PC-3 (cell line): ENCODE measurements at regions of chr2 and their contacts with region 1.

Region 1: DNA sequence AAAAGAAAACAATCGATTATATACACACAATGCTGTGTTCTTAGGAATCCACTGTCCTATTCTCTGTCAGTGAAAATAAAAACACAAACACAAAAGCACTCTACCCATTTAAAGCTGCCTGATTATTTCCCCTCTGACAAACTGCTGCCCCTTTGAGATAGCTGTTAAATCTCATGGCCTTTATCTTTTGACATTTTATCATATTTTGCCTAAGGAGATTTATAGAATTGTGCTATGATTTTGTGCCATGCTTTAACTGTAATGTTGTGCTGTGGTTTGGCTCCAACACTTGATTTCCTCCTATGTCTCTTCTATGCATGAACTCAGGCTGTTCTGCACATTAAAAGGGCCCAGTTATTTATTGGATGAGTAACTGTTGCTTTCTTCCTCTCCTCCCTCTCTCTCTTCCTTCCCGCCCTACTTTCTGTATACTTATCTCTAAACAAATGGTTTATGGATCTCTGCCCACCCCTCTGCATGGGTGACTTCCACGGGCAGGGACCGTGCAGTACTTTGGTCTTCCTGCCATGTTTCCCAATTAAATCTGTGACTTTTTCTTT is 1096.6 kb downstream of the TSN start:
- DNase-seq: peak; percentile 87
- ATAC-seq: peak; percentile 74
- H3K4me3 ChIP-seq: no peak overlapping the region
- H3K27ac ChIP-seq: peak overlapping the region; percentile 85
- H3K4me1 ChIP-seq: peaks cover 50% of the 10 kb centered on the region
- H3K27me3 ChIP-seq: no peaks in the 10 kb centered on the region
- CTCF ChIP-seq: no peak

Region 2: GRCh38 chr2:122506620-122507019 is 345.4 kb before region 1 on chr2:
- CTCF ChIA-PET with region 1: no interaction called
- POLR2A ChIA-PET with region 1: no interaction called
- intact Hi-C with region 1: loop called (anchors 5 kb)
- DNase-seq: no peak
- ATAC-seq: no peak
- H3K4me3 ChIP-seq: no peak overlapping the region
- H3K27ac ChIP-seq: no peak overlapping the region
- H3K4me1 ChIP-seq: no peaks in the 10 kb centered on the region
- H3K27me3 ChIP-seq: no peaks in the 10 kb centered on the region
- CTCF ChIP-seq: no peak

Region 3: DNA sequence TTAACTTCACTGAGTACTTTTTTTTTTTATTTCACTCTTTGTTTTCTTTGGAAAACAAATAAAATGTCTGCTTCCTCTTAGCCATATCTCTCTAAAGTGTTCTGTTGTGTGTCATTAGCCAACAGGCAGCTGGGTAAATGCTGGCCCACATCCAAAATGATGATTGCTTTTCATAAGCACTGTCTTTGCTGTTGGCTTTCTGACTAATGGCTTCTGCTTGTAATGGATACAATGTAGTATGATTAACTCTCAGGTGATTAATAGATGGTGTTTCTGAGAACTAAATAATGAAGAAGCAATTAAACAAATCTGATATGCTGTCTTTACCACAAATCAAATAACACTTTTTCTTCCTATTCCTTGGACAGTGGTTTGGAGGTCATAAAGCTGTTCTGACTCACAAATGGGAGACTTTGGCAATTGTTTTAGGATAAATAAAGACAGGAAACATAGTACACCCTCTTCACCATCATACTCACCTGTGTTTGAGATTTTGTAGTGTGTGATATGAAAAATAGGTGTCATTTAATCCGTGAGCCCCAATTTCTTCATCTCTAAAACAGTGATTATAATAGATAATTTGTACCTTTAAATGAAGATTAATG is 208.2 kb before region 1 on chr2:
- CTCF ChIA-PET with region 1: no interaction called
- POLR2A ChIA-PET with region 1: no interaction called
- intact Hi-C with region 1: loop called (anchors 5 kb)
- DNase-seq: peak; percentile 97
- ATAC-seq: peak; percentile 95
- H3K4me3 ChIP-seq: no peak overlapping the region
- H3K27ac ChIP-seq: peak overlapping the region; percentile 64
- H3K4me1 ChIP-seq: peaks cover 23% of the 10 kb centered on the region
- H3K27me3 ChIP-seq: no peaks in the 10 kb centered on the region
- CTCF ChIP-seq: no peak

Region 4: GRCh38 chr2:122883849-122884248 is 31.8 kb after region 1 on chr2:
- CTCF ChIA-PET with region 1: interaction called, 5 read pairs
- POLR2A ChIA-PET with region 1: interaction called, 3 read pairs
- intact Hi-C with region 1: loop called (anchors 1 kb)
- DNase-seq: no peak
- ATAC-seq: no peak
- H3K4me3 ChIP-seq: no peak overlapping the region
- H3K27ac ChIP-seq: peak overlapping the region; percentile 87
- H3K4me1 ChIP-seq: peaks cover 18% of the 10 kb centered on the region
- H3K27me3 ChIP-seq: no peaks in the 10 kb centered on the region
- CTCF ChIP-seq: no peak

Region 5: DNA sequence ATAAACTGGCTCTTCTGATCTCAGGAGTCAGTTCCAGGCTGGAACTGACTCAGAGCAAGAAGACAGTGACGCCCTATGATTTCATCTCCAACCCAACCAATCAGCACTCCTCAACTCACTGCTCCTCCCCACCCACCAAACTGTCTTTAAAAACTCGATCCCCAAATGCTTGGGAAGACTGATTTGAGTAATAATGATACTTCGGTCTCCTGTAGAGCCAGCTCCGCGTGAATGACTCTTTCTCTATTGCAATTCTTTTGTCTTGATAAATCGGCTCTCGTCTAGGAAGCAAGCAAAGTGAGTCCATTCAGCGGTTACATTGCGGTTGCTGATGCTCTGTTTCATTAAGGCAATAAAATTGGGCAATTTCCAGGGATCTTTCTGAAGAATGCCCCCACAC is 147.8 kb after region 1 on chr2:
- CTCF ChIA-PET with region 1: no interaction called
- POLR2A ChIA-PET with region 1: no interaction called
- intact Hi-C with region 1: no loop called
- DNase-seq: no peak
- ATAC-seq: no peak
- H3K4me3 ChIP-seq: no peak overlapping the region
- H3K27ac ChIP-seq: no peak overlapping the region
- H3K4me1 ChIP-seq: no peaks in the 10 kb centered on the region
- H3K27me3 ChIP-seq: no peaks in the 10 kb centered on the region
- CTCF ChIP-seq: no peak

Region 6: DNA sequence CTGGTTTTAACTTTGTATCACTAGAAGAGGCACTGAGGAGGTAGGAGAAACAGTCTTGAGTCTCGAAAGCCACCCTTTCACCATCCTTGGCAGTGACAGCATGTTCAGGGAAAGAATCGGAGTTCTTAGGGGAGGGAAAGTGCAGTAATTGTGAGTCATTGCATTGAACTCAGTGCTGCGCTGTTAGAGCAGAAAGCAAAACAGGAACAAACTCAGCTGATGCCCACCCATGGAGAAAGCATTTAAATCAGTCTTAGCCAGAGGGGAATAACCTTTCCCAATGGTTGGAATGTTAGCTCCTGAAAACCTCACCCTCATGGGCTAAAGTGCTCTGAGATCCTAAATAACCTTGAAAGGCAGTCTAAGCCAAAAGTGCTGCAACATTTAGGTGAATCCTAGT is 327.5 kb after region 1 on chr2:
- CTCF ChIA-PET with region 1: no interaction called
- POLR2A ChIA-PET with region 1: no interaction called
- intact Hi-C with region 1: loop called (anchors 10 kb)
- DNase-seq: peak; percentile 26
- ATAC-seq: peak; percentile 79
- H3K4me3 ChIP-seq: no peak overlapping the region
- H3K27ac ChIP-seq: no peak overlapping the region
- H3K4me1 ChIP-seq: no peaks in the 10 kb centered on the region
- H3K27me3 ChIP-seq: no peaks in the 10 kb centered on the region
- CTCF ChIP-seq: no peak

Region 7: GRCh38 chr2:123518367-123518766 is 666.3 kb after region 1 on chr2:
- CTCF ChIA-PET with region 1: no interaction called
- POLR2A ChIA-PET with region 1: no interaction called
- intact Hi-C with region 1: loop called (anchors 10 kb)
- DNase-seq: peak; percentile 88
- ATAC-seq: peak; percentile 83
- H3K4me3 ChIP-seq: no peak overlapping the region
- H3K27ac ChIP-seq: peak overlapping the region; percentile 56
- H3K4me1 ChIP-seq: peaks cover 39% of the 10 kb centered on the region
- H3K27me3 ChIP-seq: no peaks in the 10 kb centered on the region
- CTCF ChIP-seq: no peak